ENCODE measurements at regions of chr1 and their contacts with region 1.

Region 1: GRCh38 chr1:85148524-85149250 is 52.1 kb downstream of the SYDE2 start:
- DNase-seq: no peak
- H3K4me3 ChIP-seq: no peak overlapping the region
- H3K4me3 Mint-ChIP-seq: no peak overlapping the region
- H3K27ac Mint-ChIP-seq: no peak overlapping the region
- H3K4me1 ChIP-seq: peaks cover 25% of the 10 kb centered on the region
- H3K4me1 Mint-ChIP-seq: peaks cover 31% of the 10 kb centered on the region
- H3K27me3 ChIP-seq: no peaks in the 10 kb centered on the region
- H3K27me3 Mint-ChIP-seq: no peaks in the 10 kb centered on the region
- CTCF ChIP-seq: no peak

Region 2: GRCh38 chr1:85134576-85135395 is 13.9 kb before region 1 on chr1:
- CTCF ChIA-PET with region 1: no interaction called
- POLR2A ChIA-PET with region 1: no interaction called
- intact Hi-C with region 1: loop called (anchors 1 kb)
- DNase-seq: peak; percentile 63
- H3K4me3 ChIP-seq: no peak overlapping the region
- H3K4me3 Mint-ChIP-seq: no peak overlapping the region
- H3K27ac Mint-ChIP-seq: no peak overlapping the region
- H3K4me1 ChIP-seq: peaks cover 27% of the 10 kb centered on the region
- H3K4me1 Mint-ChIP-seq: no peaks in the 10 kb centered on the region
- H3K27me3 ChIP-seq: no peaks in the 10 kb centered on the region
- H3K27me3 Mint-ChIP-seq: no peaks in the 10 kb centered on the region
- CTCF ChIP-seq: no peak